ENCODE measurements at regions of chr3 and their contacts with region 1.

Region 1: DNA sequence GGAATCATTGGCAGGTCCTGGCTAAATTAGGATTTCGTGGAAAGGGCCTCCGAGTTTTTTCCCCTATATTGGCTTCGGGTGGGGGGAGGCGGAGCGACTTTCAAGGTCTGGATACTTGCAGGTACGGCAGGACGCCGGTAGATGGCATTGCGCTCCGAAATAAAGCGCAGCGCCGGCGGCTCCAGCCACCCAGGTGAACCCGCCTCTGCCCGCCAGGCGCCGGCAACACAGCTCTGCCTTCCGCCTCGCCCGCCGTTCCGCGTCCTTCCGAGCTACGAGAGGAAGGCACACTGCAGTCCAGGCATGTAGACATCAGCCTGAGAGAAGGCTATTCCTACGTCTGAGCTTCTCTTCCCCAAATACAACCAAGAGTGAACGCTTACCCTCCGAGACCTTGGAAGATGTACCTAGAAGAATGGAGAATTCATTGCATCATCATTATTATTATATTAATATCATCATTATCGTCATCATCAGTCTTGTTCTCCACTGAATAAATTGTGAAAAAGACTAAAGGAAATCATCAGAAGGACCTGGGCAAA is 514.1 kb downstream of the MECOM start:
- DNase-seq: peak; percentile 86 to 89 (median 89)
- H3K4me3 ChIP-seq: peak overlapping the region; percentile 19 to 88 (median 72)
- H3K27ac ChIP-seq: peak overlapping the region in 1 of 2 experiments; percentile 43
- H3K4me1 ChIP-seq: peaks cover 9 to 49% (median 30%) of the 10 kb centered on the region in 4 experiments
- H3K27me3 ChIP-seq: no peaks in the 10 kb centered on the region

Region 2: DNA sequence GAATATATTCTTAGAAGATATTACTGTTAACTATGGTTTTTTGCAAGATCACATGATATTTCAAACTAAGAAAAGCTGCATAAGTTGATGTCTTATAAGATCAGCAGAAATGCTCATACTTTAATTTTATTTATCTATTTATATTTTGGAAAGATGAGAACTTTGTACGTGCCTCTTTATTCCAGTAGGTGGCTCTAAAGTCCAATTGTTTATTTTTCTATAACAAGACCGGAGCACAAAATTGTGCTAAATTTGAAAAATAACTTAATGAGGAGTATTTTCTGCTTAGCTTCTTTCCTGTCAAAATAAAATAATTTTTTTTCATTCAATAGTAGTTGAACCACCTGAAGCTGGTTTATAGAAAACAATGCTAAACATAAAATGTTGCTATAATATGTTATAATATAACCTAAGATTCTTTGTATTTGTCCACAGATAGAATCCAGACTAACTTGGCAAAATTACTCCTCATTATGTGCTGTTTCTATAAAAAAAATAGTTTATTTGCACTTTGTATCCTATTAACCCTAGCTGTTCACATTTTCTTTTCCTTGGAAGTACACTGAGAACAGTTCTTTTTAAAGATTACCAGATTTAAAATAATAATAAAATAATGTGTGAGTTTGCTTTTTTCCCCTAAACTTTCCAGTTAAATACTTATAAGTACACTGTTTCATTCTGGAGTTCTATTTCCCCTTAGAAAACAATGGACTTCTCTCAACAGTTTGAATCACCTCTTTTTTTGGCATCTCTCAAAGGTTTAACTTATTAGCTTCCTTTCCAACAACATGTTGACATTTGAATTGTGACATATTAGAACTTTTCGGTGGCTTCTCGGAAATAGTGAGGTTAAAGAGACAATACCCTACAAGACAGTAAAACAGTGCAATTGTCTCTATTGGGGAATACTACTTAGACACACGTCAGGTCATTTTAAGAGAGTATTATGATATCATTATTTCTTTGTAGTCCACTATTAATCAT is 15.9 kb before region 1 on chr3:
- CTCF ChIA-PET with region 1: interaction called, 21 read pairs
- POLR2A ChIA-PET with region 1: interaction called, 5 read pairs
- DNase-seq: peak in 2 of 3 donors; percentile 66 to 71
- H3K4me3 ChIP-seq: no peak overlapping the region
- H3K27ac ChIP-seq: no peak overlapping the region
- H3K4me1 ChIP-seq: peaks cover 4 to 16% (median 4%) of the 10 kb centered on the region in 4 experiments
- H3K27me3 ChIP-seq: no peaks in the 10 kb centered on the region

Region 3: GRCh38 chr3:169165196-169166158 is 16.1 kb after region 1 on chr3:
- CTCF ChIA-PET with region 1: interaction called, 14 read pairs
- POLR2A ChIA-PET with region 1: interaction called, 3 read pairs
- DNase-seq: no peak
- H3K4me3 ChIP-seq: no peak overlapping the region
- H3K27ac ChIP-seq: no peak overlapping the region
- H3K4me1 ChIP-seq: no peaks in the 10 kb centered on the region
- H3K27me3 ChIP-seq: no peaks in the 10 kb centered on the region

Region 4: GRCh38 chr3:169241991-169242707 is 92.7 kb after region 1 on chr3:
- CTCF ChIA-PET with region 1: interaction called, 11 read pairs
- POLR2A ChIA-PET with region 1: no interaction called
- DNase-seq: peak in 1 of 3 donors; percentile 48
- H3K4me3 ChIP-seq: peak overlapping the region; percentile 18 to 76 (median 63)
- H3K27ac ChIP-seq: peak overlapping the region in 1 of 2 experiments; percentile 22
- H3K4me1 ChIP-seq: peaks cover 5 to 23% (median 13%) of the 10 kb centered on the region in 4 experiments
- H3K27me3 ChIP-seq: peaks cover 0 to 11% (median 3%) of the 10 kb centered on the region in 5 experiments

Region 5: GRCh38 chr3:169390271-169391230 is 241.1 kb after region 1 on chr3:
- CTCF ChIA-PET with region 1: interaction called, 12 read pairs
- POLR2A ChIA-PET with region 1: interaction called, 3 read pairs
- DNase-seq: peak; percentile 39 to 60 (median 52)
- H3K4me3 ChIP-seq: no peak overlapping the region
- H3K27ac ChIP-seq: no peak overlapping the region
- H3K4me1 ChIP-seq: peaks cover 6 to 22% (median 12%) of the 10 kb centered on the region in 4 experiments
- H3K27me3 ChIP-seq: no peaks in the 10 kb centered on the region

Region 6: GRCh38 chr3:169668957-169669681 is 519.7 kb after region 1 on chr3:
- CTCF ChIA-PET with region 1: interaction called, 47 read pairs
- POLR2A ChIA-PET with region 1: no interaction called
- DNase-seq: peak; percentile 74 to 81 (median 77)
- H3K4me3 ChIP-seq: peak overlapping the region in 6 of 7 experiments; percentile 54 to 83 (median 75)
- H3K27ac ChIP-seq: no peak overlapping the region
- H3K4me1 ChIP-seq: peaks cover 3 to 34% (median 22%) of the 10 kb centered on the region in 4 experiments
- H3K27me3 ChIP-seq: peaks cover 11 to 48% (median 21%) of the 10 kb centered on the region in 5 experiments